HCT116 (cell line): ENCODE measurements at regions of chr1 and their contacts with region 1.

Region 1: DNA sequence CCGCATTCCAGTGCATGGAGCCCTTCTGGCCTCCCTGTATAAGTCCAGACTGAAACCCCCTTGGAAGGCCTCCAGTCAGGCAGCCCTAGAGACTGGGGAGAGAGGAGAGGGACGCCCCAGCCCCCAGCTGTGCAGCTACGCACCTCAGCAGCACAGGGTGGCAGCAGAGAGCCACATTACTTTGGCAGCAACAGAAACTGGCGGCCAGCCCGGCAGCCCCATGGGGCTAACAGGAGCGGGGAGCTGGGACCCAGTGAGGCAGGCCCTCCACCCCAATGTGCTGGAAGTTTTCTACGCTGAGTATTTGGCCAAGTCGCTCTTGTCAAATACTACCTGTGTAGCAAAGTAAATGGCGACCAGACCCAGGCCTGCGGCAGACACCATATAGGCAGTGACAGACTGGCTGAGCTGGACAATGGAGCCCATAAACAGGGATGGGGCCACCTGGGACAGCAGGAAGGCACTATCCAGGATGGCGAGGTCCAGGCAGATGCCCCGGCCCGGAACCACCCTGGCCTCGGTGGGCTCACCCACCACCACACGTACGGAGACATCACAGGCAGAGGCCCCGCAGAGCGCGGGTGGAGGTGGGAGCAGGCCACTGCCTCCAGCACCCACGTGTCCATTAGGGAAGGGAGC is 21.2 kb downstream of the SLC45A3 start:
- DNase-seq: no peak
- ATAC-seq: peak; percentile 90
- H3K4me3 ChIP-seq: no peak overlapping the region
- H3K27ac ChIP-seq: no peak overlapping the region
- H3K4me1 ChIP-seq: peaks cover 4 to 10% of the 10 kb centered on the region in 2 experiments
- H3K27me3 ChIP-seq: no peaks in the 10 kb centered on the region
- CTCF ChIP-seq: peak; percentile 83 to 89 (median 88)
- POLR2A ChIP-seq: no peak
- RAD21 ChIP-seq: peak; percentile 96

Region 2: DNA sequence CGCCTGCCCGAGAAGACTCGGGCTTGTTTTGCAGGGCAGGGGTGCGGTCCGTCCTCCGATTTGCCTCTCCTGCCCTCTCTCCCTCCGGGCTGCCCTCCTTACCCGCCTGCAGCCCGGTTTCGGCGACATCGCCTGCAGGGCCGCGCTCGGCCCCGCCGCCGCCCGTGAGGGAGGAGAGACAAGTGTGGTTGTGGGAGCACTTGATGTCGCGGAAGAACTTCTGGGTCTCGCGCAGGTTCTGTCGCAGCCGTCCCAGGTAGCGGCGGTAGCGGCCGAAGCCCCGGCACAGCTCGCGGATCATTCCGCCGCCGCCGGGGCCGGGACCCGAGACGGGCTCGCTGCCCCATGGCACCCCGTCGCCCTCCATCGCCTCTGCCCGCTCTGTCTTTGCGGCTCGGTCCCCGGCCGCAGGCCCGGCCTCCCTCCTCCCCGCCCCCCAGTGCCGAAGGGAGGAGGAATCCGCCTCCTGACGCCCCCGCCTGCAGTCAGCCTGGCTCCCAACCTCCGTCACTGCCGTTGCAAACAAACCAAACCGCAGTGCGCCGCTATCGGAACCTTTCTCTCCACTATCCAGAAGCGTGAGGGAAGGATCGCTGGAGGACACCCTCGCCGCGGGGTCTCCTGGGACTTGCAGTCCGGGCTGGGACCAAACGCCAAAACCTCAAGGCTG is 447.8 kb before region 1 on chr1 and contains the start of gene DSTYK:
- CTCF ChIA-PET with region 1: no interaction called
- POLR2A ChIA-PET with region 1: no interaction called
- RAD21 ChIA-PET with region 1: no interaction called
- intact Hi-C with region 1: no loop called
- DNase-seq: peak; percentile 92
- ATAC-seq: peak; percentile 91
- H3K4me3 ChIP-seq: peak within 1 kb of the TSS; percentile 74 to 99
- H3K27ac ChIP-seq: peak within 1 kb of the TSS; percentile 74
- H3K4me1 ChIP-seq: peaks cover 2 to 16% of the 10 kb centered on the region in 2 experiments; a peak in 2 of 4 replicates
- H3K27me3 ChIP-seq: no peaks in the 10 kb centered on the region
- CTCF ChIP-seq: no peak
- POLR2A ChIP-seq: peak; percentile 86
- RAD21 ChIP-seq: peak; percentile 40
- total RNA-seq, gene DSTYK: 6.6 TPM

Region 3: DNA sequence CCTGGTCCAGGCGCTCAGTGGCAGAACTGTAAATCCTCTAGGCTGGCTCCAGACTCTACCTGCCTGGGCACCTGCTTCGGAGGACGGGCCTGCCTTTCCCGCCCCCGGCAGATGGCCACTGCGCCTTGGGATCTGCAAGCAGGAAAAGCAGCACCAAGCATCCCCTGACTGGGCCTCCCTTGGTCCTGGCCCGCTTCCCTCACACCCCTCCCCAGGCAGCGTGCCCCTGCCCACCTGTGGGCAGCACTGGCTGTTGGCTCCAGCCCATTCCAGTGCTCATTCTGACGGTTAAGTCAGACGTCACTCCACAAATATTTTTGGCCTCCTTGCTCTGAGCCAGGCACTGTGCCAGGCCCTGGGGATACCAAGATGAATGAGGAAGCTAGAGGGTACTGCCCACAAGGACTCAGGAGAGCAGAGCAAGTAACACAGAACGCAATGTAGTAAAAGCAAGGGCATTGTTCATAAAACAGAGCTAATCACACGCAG is 181.3 kb before region 1 on chr1:
- CTCF ChIA-PET with region 1: no interaction called
- POLR2A ChIA-PET with region 1: no interaction called
- RAD21 ChIA-PET with region 1: no interaction called
- intact Hi-C with region 1: no loop called
- DNase-seq: peak; percentile 59
- ATAC-seq: peak; percentile 70
- H3K4me3 ChIP-seq: no peak overlapping the region; a peak in 1 of 4 replicates
- H3K27ac ChIP-seq: 0 out of 2 replicates have a peak overlapping the region, but pooled peaks have one; percentile 9
- H3K4me1 ChIP-seq: peaks cover 10 to 15% of the 10 kb centered on the region in 2 experiments
- H3K27me3 ChIP-seq: peaks cover 2% of the 10 kb centered on the region; the same call in 1 of the 2 replicates
- CTCF ChIP-seq: no peak
- POLR2A ChIP-seq: no peak
- RAD21 ChIP-seq: no peak

Region 4: DNA sequence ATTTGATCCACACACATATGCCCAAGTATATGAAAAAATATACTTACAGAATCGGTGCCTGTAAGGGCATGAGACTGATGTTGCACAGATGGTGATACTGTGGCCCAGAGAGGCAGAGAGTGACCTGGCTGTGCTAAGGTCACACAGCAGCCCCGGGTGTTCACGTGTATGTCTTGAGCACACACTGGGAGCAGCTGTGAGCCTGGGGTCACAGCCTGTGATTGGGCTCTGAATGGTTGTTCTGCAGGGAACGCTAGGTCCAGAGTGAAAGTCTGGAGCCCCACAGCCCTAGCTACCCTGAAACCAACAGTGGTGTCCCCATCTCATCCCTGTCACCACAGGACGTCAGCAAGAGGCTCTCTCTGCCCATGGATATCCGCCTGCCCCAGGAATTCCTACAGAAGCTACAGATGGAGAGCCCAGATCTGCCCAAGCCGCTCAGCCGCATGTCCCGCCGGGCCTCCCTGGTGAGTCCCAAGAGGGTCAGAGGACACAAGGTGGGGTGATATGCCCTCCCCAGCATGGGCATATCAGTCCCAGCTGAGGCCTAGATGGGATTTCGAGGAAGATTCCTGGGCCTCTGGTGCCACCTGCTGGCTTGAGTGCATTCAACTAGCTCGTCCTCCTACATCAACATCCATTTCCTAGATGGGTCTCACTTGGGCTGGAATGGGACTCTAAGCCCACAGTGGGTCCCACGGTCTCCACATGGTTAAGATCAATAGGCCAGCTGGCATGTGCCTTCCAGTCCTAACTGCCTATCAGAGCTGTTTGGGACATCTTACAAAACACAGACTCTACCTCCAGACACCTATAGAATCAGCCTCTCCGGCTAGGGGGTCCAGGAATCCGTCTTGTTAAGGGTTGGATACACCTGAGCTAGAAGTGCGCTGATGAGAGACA is 134.9 kb before region 1 on chr1:
- CTCF ChIA-PET with region 1: interaction called, 35 read pairs
- POLR2A ChIA-PET with region 1: no interaction called
- RAD21 ChIA-PET with region 1: interaction called, 6 to 21 read pairs
- intact Hi-C with region 1: loop called (anchors 1 kb)
- DNase-seq: peak; percentile 46
- ATAC-seq: peak; percentile 71
- H3K4me3 ChIP-seq: no peak overlapping the region
- H3K27ac ChIP-seq: no peak overlapping the region
- H3K4me1 ChIP-seq: peaks cover 0 to 11% of the 10 kb centered on the region in 2 experiments; a peak in 2 of 4 replicates
- H3K27me3 ChIP-seq: no peaks in the 10 kb centered on the region
- CTCF ChIP-seq: peak; percentile 76 to 93 (median 84)
- POLR2A ChIP-seq: no peak
- RAD21 ChIP-seq: peak; percentile 97

Region 5: DNA sequence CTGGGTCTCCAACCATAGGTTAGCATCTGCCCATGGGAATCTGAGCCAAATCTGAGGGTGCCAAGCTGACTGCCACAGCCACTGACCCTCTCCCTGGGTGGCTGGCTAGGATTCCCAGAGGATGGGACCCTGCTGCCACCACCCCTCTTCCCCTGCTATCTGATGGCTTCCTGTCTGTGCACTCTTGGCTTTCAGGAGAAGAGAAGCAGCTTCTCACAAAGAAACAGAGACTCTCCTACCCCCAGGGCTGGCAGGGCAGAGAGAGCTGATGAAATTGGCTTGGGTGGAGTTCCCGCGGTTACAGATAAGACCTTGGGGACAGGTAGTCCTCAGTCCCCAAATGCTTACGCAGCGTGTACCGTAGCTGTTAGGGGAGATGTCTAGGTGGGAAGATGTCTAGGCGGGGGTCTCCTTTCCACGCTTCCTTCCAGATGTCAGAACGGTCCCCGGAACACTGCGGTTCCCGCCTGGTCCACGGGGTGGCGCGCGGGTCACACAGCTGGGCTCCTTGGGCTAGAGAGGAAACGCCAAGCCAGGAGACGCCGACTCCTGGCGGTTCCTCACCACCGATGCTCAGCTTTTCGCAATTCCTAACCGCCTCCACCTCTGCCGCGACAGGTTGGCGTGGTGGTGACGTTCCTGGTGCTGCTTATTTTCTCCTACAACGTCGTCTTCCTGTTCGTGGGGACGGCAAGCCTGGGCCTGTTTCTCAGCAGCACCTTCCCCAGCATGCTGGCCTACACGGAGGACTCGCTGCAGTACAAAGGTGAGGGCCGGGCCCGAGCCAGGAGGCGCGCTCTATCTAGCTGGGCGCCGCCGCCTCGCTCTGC is 67.3 kb before region 1 on chr1:
- CTCF ChIA-PET with region 1: interaction called, 230 read pairs
- POLR2A ChIA-PET with region 1: interaction called, 3 read pairs
- RAD21 ChIA-PET with region 1: interaction called, 38 to 45 read pairs
- intact Hi-C with region 1: loop called (anchors 1 kb)
- DNase-seq: peak; percentile 65
- ATAC-seq: peak; percentile 89
- H3K4me3 ChIP-seq: peak overlapping the region; percentile 37 to 53
- H3K27ac ChIP-seq: peak overlapping the region; percentile 14; the same call in 1 of the 2 replicates
- H3K4me1 ChIP-seq: peaks cover 0 to 11% of the 10 kb centered on the region in 2 experiments; a peak in 2 of 4 replicates
- H3K27me3 ChIP-seq: no peaks in the 10 kb centered on the region
- CTCF ChIP-seq: peak; percentile 97 to 98 (median 98)
- POLR2A ChIP-seq: no peak
- RAD21 ChIP-seq: peak; percentile 99

Region 6: GRCh38 chr1:205645519-205645918 is 13.5 kb before region 1 on chr1:
- CTCF ChIA-PET with region 1: interaction called, 13 read pairs
- POLR2A ChIA-PET with region 1: no interaction called
- RAD21 ChIA-PET with region 1: no interaction called
- intact Hi-C with region 1: no loop called
- DNase-seq: no peak
- ATAC-seq: no peak
- H3K4me3 ChIP-seq: no peak overlapping the region
- H3K27ac ChIP-seq: no peak overlapping the region
- H3K4me1 ChIP-seq: no peaks in the 10 kb centered on the region
- H3K27me3 ChIP-seq: no peaks in the 10 kb centered on the region
- CTCF ChIP-seq: no peak
- POLR2A ChIP-seq: no peak
- RAD21 ChIP-seq: no peak

Region 7: GRCh38 chr1:205711104-205712020 is 52.3 kb after region 1 on chr1:
- CTCF ChIA-PET with region 1: interaction called, 163 read pairs
- POLR2A ChIA-PET with region 1: interaction called, 16 read pairs
- RAD21 ChIA-PET with region 1: interaction called, 14 to 15 read pairs
- intact Hi-C with region 1: loop called (anchors 1 kb)
- DNase-seq: peak; percentile 68
- ATAC-seq: peak; percentile 93
- H3K4me3 ChIP-seq: no peak overlapping the region
- H3K27ac ChIP-seq: no peak overlapping the region
- H3K4me1 ChIP-seq: no peaks in the 10 kb centered on the region
- H3K27me3 ChIP-seq: no peaks in the 10 kb centered on the region
- CTCF ChIP-seq: peak; percentile 86 to 92 (median 90)
- POLR2A ChIP-seq: no peak
- RAD21 ChIP-seq: peak; percentile 93

Region 8: GRCh38 chr1:205907794-205908193 is 248.7 kb after region 1 on chr1:
- CTCF ChIA-PET with region 1: interaction called, 16 read pairs
- POLR2A ChIA-PET with region 1: no interaction called
- RAD21 ChIA-PET with region 1: interaction called in 1 of 2 experiments, 7 read pairs
- intact Hi-C with region 1: loop called (anchors 1 kb)
- DNase-seq: peak; percentile 39
- ATAC-seq: peak; percentile 95
- H3K4me3 ChIP-seq: no peak overlapping the region
- H3K27ac ChIP-seq: no peak overlapping the region
- H3K4me1 ChIP-seq: no peaks in the 10 kb centered on the region
- H3K27me3 ChIP-seq: peaks cover 3% of the 10 kb centered on the region; the same call in 1 of the 2 replicates
- CTCF ChIP-seq: peak; percentile 66 to 82 (median 78)
- POLR2A ChIP-seq: no peak
- RAD21 ChIP-seq: peak; percentile 70